ENCODE measurements at regions of chr9 and their contacts with region 1.

Region 1: GRCh38 chr9:132944302-132945185 is at the start of gene TSC1:
- DNase-seq: peak; percentile 76 to 97
- H3K4me3 ChIP-seq: peak within 1 kb of the TSS; percentile 69 to 82
- H3K27ac ChIP-seq: peak within 1 kb of the TSS; percentile 94 to 96
- H3K4me1 ChIP-seq: peaks cover 0 to 14% of the 10 kb centered on the region in 2 donors
- H3K27me3 ChIP-seq: no peaks in the 10 kb centered on the region
- CTCF ChIP-seq: no peak
- total RNA-seq, gene TSC1: 39.8 TPM

Region 2: GRCh38 chr9:132669698-132670456 is 274.7 kb before region 1 on chr9 and contains the start of gene DDX31:
- intact Hi-C with region 1: loop called (anchors 2 kb)
- DNase-seq: peak; percentile 21 to 89
- H3K4me3 ChIP-seq: peak within 1 kb of the TSS; percentile 83 to 100
- H3K27ac ChIP-seq: peak within 1 kb of the TSS; percentile 93 to 99
- H3K4me1 ChIP-seq: peaks cover 0 to 19% of the 10 kb centered on the region in 2 donors
- H3K27me3 ChIP-seq: no peaks in the 10 kb centered on the region
- CTCF ChIP-seq: no peak
- total RNA-seq, gene DDX31: 20.4 TPM

Region 3: GRCh38 chr9:132877824-132878694 is 66.5 kb before region 1 on chr9 and contains the start of gene AK8:
- intact Hi-C with region 1: loop called (anchors 1 kb)
- DNase-seq: peak in 1 of 2 donors; percentile 82
- H3K4me3 ChIP-seq: peak within 1 kb of the TSS; percentile 78 to 81
- H3K27ac ChIP-seq: peak within 1 kb of the TSS; percentile 64 to 71
- H3K4me1 ChIP-seq: peaks cover 3 to 8% of the 10 kb centered on the region in 2 donors
- H3K27me3 ChIP-seq: no peaks in the 10 kb centered on the region
- CTCF ChIP-seq: no peak
- total RNA-seq, gene AK8: not detected

Region 4: DNA sequence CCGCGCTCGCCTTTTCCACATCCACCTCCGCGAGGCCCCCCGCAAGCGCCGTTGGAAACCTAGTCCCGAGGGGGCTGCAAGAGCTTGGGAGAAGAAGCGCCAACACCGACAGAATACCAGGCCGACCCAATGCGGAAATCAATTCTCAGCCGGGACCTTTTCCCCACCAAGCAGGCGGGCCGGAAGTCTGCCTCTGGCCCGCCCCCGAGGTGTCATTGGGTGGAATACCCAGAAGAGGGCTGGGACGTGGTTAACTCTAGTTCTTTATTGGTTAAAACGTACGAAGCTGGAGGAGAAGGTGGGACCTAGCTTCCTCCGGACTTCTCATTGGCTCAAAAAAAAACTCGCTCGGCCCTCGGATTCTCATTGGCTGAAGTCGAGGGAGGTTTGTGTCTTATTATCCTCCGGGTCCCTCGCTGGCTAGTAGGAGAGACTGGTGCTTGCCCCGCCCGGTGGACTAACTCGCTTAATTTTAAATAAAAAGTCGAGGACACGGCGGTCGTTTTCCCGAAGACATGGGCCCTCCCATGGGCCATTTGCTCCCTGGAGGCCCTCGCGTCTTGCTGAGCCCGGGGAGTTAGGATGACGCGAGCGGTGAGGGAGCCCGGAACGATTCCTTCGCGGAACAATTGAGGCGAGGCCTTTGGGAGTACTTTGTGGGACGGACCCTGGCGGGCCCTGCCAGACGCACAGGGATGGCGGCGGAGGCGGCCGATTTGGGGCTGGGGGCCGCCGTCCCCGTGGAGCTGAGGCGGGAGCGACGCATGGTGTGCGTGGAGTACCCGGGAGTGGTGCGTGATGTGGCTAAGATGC is 86.0 kb after region 1 on chr9 and contains the start of gene GTF3C5:
- intact Hi-C with region 1: loop called (anchors 1 kb)
- DNase-seq: peak; percentile 83 to 97
- H3K4me3 ChIP-seq: peak within 1 kb of the TSS; percentile 86 to 96
- H3K27ac ChIP-seq: peak within 1 kb of the TSS; percentile 85 to 91
- H3K4me1 ChIP-seq: peaks cover 10 to 23% of the 10 kb centered on the region in 2 donors
- H3K27me3 ChIP-seq: no peaks in the 10 kb centered on the region
- CTCF ChIP-seq: no peak
- total RNA-seq, gene GTF3C5: 25.9 TPM

Region 5: DNA sequence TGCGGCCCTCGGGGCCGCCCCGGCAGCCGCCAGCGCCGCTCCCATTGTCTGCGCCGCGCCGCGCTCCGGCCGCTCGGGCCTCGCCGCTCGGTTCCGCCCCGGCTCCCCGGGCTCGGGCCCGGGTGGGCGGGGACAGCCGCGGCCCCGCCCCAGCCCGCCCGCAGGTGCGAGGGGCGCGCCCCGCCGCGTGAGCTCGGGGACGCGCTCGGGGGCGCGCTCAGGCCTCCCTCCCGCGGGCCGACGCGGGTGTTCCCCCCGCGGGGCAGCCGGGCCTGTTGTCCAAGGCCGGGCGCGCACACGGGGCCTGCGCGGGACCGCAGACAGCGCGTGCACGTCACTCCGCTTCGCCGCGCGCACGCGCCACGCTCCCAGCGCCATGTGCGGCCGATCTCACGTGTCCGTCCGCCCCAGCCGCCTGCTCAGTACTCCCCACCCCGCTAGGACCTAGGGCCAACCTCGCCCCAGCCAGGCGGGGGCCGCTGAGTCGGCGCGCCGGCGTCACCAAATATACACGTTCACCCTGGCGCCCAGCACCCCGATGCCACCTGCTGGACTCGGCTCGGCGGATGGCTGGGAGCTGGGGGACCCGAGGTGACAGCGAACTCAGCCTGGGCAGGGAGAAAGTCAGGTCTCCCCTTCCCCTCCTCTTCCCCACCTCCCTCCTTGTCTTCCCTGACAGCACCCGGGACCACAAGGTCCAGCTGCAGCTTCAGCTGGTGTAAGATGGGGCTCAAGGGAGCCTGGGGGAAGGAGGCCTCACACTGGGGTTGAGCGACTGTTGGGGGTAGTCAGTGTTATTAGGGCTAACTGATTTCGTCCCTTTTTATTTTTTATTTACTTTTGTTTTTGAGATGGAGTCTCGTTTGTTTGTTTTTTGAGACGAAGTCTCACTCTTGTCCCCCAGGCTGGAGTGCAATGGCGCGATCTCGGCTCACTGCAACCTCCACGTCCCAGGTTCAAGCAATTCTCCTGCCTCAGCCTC is 204.9 kb after region 1 on chr9:
- intact Hi-C with region 1: loop called (anchors 10 kb)
- DNase-seq: peak; percentile 77 to 94
- H3K4me3 ChIP-seq: peak overlapping the region; percentile 81 to 84
- H3K27ac ChIP-seq: peak overlapping the region; percentile 72 to 83
- H3K4me1 ChIP-seq: peaks cover 6 to 23% of the 10 kb centered on the region in 2 donors
- H3K27me3 ChIP-seq: no peaks in the 10 kb centered on the region
- CTCF ChIP-seq: peak in 2 of 3 experiments; percentile 24 to 37

Measured in ascending aorta (tissue), 2 donors.